B cell (primary cell): ENCODE measurements at regions of chr17 and their contacts with region 1.

Region 1: DNA sequence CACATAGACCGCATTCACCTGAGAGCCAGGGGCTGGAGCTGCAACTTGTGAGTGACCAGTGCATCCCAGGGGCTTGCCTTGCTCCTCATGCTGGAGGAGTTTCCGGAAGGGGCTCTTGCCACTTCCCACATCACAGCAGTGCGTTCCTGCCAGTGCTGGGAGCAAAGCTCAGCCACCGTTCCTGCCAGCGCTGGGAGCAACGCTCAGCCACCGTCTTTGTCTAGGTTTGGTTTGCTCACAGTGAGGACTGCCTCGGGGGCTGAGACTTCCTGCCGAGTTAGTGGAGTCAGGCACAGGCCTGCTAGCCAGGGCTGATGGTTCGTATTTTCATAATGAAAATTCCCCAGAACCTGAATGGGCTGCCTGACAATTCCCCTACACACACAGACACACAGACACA is 5.4 kb upstream of the CHRNE start:
- DNase-seq: no peak
- ATAC-seq: no peak
- H3K4me3 ChIP-seq: no peak overlapping the region
- H3K4me3 Mint-ChIP-seq: no peak overlapping the region
- H3K27ac ChIP-seq: no peak overlapping the region
- H3K27ac Mint-ChIP-seq: no peak overlapping the region
- H3K4me1 ChIP-seq: peaks cover 6 to 15% of the 10 kb centered on the region in 2 donors
- H3K4me1 Mint-ChIP-seq: peaks cover 4% of the 10 kb centered on the region
- H3K27me3 ChIP-seq: peaks cover 0 to 11% (median 1%) of the 10 kb centered on the region in 4 experiments
- H3K27me3 Mint-ChIP-seq: peaks cover 12% of the 10 kb centered on the region
- CTCF ChIP-seq: no peak

Region 2: GRCh38 chr17:4555873-4556759 is 352.2 kb before region 1 on chr17:
- CTCF ChIA-PET with region 1: no interaction called
- POLR2A ChIA-PET with region 1: no interaction called
- intact Hi-C with region 1: no loop called
- DNase-seq: no peak
- ATAC-seq: no peak
- H3K4me3 ChIP-seq: peak overlapping the region; percentile 74 to 90 (median 83)
- H3K4me3 Mint-ChIP-seq: peak overlapping the region; percentile 94
- H3K27ac ChIP-seq: peak overlapping the region; percentile 66 to 83
- H3K27ac Mint-ChIP-seq: peak overlapping the region; percentile 96
- H3K4me1 ChIP-seq: peaks cover 19 to 21% of the 10 kb centered on the region in 2 donors
- H3K4me1 Mint-ChIP-seq: peaks cover 24% of the 10 kb centered on the region
- H3K27me3 ChIP-seq: no peaks in the 10 kb centered on the region
- H3K27me3 Mint-ChIP-seq: no peaks in the 10 kb centered on the region
- CTCF ChIP-seq: no peak

Region 3: GRCh38 chr17:4948931-4949320 is 40.6 kb after region 1 on chr17:
- CTCF ChIA-PET with region 1: interaction called, 5 read pairs
- POLR2A ChIA-PET with region 1: interaction called, 3 read pairs
- intact Hi-C with region 1: loop called (anchors 1 kb)
- DNase-seq: peak; percentile 90
- ATAC-seq: peak; percentile 50
- H3K4me3 ChIP-seq: peak overlapping the region; percentile 59 to 99 (median 96)
- H3K4me3 Mint-ChIP-seq: peak overlapping the region; percentile 98
- H3K27ac ChIP-seq: peak overlapping the region; percentile 73 to 93
- H3K27ac Mint-ChIP-seq: peak overlapping the region; percentile 99
- H3K4me1 ChIP-seq: peaks cover 37 to 45% of the 10 kb centered on the region in 2 donors
- H3K4me1 Mint-ChIP-seq: peaks cover 46% of the 10 kb centered on the region
- H3K27me3 ChIP-seq: no peaks in the 10 kb centered on the region
- H3K27me3 Mint-ChIP-seq: no peaks in the 10 kb centered on the region
- CTCF ChIP-seq: no peak

Region 4: GRCh38 chr17:4980644-4981216 is 72.4 kb after region 1 on chr17:
- CTCF ChIA-PET with region 1: interaction called, 35 read pairs
- POLR2A ChIA-PET with region 1: interaction called, 8 read pairs
- intact Hi-C with region 1: no loop called
- DNase-seq: peak; percentile 66
- ATAC-seq: peak; percentile 75
- H3K4me3 ChIP-seq: no peak overlapping the region
- H3K4me3 Mint-ChIP-seq: peak overlapping the region; percentile 29
- H3K27ac ChIP-seq: no peak overlapping the region
- H3K27ac Mint-ChIP-seq: peak overlapping the region; percentile 87
- H3K4me1 ChIP-seq: peaks cover 18 to 35% of the 10 kb centered on the region in 2 donors
- H3K4me1 Mint-ChIP-seq: peaks cover 41% of the 10 kb centered on the region
- H3K27me3 ChIP-seq: no peaks in the 10 kb centered on the region
- H3K27me3 Mint-ChIP-seq: no peaks in the 10 kb centered on the region
- CTCF ChIP-seq: peak; percentile 77

Region 5: DNA sequence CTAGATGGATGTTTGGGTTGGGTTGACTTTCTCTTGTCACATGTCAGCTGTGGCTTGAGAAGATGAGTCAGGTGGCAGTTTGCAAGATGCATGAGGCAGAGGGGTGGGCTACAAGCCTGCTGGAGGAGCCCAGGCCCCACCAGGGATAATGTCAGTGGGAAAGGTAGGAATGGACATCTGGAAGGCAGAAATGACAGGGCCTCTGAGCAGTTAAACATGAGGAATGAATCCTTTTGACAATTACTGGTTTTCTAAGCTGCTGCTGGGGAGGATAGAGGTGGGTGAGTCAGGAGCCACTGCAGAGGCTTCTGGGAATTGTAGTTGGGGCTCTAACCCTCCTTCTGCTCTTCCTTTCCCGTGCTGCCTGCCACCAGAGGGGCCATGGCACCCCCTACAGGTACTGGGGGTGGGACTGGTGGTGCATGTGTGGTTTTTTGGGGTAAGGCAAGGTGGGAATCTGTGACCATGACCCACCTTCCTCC is 111.2 kb after region 1 on chr17:
- CTCF ChIA-PET with region 1: interaction called, 11 read pairs
- POLR2A ChIA-PET with region 1: interaction called, 11 read pairs
- intact Hi-C with region 1: loop called (anchors 1 kb)
- DNase-seq: peak; percentile 62
- ATAC-seq: peak; percentile 52
- H3K4me3 ChIP-seq: no peak overlapping the region
- H3K4me3 Mint-ChIP-seq: no peak overlapping the region
- H3K27ac ChIP-seq: no peak overlapping the region
- H3K27ac Mint-ChIP-seq: peak overlapping the region; percentile 50
- H3K4me1 ChIP-seq: peaks cover 6 to 14% of the 10 kb centered on the region in 2 donors
- H3K4me1 Mint-ChIP-seq: peaks cover 13% of the 10 kb centered on the region
- H3K27me3 ChIP-seq: peaks cover 0 to 32% (median 1%) of the 10 kb centered on the region in 4 experiments
- H3K27me3 Mint-ChIP-seq: no peaks in the 10 kb centered on the region
- CTCF ChIP-seq: no peak

Region 6: GRCh38 chr17:5065227-5065744 is 157.0 kb after region 1 on chr17:
- CTCF ChIA-PET with region 1: interaction called, 39 read pairs
- POLR2A ChIA-PET with region 1: interaction called, 3 read pairs
- intact Hi-C with region 1: loop called (anchors 1 kb)
- DNase-seq: no peak
- ATAC-seq: no peak
- H3K4me3 ChIP-seq: no peak overlapping the region
- H3K4me3 Mint-ChIP-seq: no peak overlapping the region
- H3K27ac ChIP-seq: no peak overlapping the region
- H3K27ac Mint-ChIP-seq: peak overlapping the region; percentile 37
- H3K4me1 ChIP-seq: peaks cover 0 to 3% of the 10 kb centered on the region in 2 donors
- H3K4me1 Mint-ChIP-seq: peaks cover 4% of the 10 kb centered on the region
- H3K27me3 ChIP-seq: peaks cover 0 to 6% (median 0%) of the 10 kb centered on the region in 4 experiments
- H3K27me3 Mint-ChIP-seq: peaks cover 9% of the 10 kb centered on the region
- CTCF ChIP-seq: no peak